ENCODE measurements at regions of chr6 and their contacts with region 1.

Region 1: DNA sequence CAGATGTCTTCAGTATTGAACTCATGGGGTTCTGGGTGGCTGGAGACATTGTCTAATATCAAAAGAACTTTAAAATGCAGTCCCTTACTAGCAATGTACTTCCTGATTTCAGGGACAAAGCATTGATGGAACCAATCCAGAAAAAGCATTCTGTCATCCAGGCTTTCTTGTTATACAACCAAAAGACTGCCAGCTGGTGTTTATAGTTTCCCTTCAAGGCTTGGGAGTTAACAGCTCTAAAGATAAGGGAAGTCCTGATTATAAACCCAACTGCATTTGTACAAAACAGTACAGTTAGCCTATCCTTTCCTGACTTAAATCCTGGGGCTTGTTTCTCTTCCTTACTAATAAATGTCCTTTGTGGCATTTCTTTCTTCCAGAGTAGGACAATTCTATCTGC is 160.0 kb downstream of the COL21A1 start:
- DNase-seq: no peak
- H3K4me3 ChIP-seq: no peak overlapping the region
- CTCF ChIP-seq: no peak
- POLR2A ChIP-seq: no peak

Region 2: DNA sequence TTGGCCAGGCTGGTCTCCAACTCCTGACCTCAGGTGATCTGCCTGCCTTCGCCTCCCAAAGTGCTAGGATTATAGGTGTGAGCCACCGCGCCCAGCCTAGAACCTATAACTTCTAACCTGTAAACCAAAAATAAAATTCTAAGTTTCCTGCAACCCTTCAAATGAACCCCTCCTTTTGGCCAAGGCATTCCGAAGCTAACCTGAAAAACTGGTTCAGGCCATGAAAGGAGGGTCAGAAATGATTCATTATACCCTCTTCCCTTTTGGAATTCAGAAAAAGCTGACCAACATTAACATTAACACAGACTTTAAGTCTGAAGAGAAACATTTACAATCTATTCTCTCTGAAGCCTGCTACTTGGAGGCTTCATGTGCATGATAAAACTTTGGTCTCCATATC is 1614.1 kb before region 1 on chr6:
- intact Hi-C with region 1: loop called (anchors 10 kb)
- DNase-seq: no peak
- H3K4me3 ChIP-seq: no peak overlapping the region
- CTCF ChIP-seq: no peak
- POLR2A ChIP-seq: no peak

Measured in lower leg skin (tissue), 4 donors.